Activated T-helper 2 cell treated with anti-CD3 and anti-CD28 coated beads, Interferon-gamma antibody, Interleukin-2, Interleukin-4, amounts not matched to agents 10 μg/mL and 5 μg/mL and 100 μg/mL, durations not matched to agents 14 hours and 24 hours and 36 hours (primary cell): ENCODE measurements at regions of chr7 and their contacts with region 1.

Region 1: DNA sequence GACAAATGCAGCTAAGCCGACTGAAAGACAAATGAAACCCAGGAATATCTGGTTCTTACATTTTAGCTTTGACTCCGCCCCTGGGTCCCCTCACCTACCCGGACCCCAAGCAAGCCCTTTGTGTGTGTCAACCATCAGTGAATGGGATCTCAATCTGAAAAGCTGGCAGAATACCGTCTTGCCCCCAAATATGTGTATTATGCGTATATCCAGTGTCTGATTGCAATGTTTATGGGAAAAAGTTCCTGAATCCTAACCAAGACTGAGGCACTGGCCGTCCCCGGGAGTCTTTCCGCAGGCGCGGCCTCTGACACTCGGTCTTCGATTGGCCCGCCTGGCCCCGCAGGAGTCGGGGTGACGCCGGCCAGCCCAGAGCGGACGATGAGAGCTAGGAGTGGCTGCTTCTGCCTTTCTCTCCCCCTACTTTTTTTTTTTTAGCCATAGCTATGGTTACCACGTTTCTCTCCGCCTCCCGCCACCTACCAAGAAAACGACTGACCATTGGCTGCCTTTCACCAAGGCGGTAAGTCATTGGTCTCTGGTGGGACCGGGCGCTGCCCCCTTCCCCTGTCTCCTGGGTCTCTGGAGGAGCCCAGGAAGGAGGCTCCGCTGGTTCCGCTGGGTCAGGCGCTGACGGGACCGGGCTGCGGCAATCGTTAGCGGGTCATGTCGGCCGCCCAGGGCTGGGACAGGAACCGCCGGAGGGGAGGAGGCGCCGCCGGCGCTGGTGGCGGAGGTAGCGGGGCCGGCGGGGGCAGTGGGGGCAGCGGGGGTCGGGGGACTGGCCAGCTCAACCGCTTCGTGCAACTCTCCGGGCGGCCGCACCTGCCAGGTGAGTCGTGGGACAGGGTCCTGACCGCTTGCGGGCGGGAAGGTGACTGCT is at the start of gene KLHDC10:
- DNase-seq: peak; percentile 94
- H3K4me3 Mint-ChIP-seq: peak within 1 kb of the TSS; percentile 95
- H3K27ac Mint-ChIP-seq: peak within 1 kb of the TSS; percentile 81
- H3K4me1 Mint-ChIP-seq: peaks cover 19% of the 10 kb centered on the region
- H3K27me3 Mint-ChIP-seq: no peaks in the 10 kb centered on the region
- total RNA-seq, gene KLHDC10: 13.9 and 16.0 TPM in 2 replicates

Region 2: DNA sequence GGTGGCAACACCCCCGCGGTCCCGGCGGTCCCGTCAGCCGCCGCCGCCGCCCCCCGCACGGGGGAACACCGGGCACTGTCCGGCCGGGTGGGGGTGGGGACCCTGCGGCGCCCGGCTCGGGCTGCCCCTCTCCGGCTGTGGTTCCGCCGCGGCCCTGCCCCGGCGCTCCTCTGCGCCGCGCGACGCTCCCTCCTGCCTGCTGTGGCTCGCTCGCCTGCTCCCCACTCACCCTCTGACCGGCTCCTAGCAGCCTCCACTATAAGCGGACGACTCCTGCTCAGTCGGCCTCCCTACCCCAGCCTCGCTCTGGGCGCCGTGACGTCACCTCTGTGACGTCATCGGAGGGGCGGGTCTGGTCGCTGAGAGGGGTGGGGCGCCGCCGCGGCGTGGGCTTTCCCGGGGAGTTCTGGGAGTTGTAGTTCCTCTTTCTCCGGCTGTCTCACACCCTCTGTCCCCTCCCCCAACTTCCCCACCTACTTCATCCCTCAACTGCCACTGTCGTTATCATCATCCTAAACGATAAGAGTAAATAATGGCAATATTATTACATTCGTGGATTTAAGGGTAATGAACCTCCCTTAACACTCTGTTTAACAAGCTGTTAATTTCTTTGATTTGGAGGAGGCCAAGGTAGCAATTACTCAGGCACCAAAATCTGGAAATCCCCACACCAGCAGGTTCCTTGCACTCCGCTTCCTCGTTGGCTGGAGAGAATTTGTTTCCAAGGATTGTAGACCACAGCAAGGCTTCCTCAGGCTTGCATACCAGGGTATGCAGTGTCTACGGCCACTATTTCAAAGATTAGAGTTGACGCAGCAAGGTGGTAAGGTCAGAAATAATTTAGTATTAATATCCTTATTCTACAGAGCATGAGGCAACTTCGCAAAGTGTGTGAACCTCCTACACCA is 117.3 kb before region 1 on chr7 and contains the start of gene UBE2H:
- intact Hi-C with region 1: loop called (anchors 2 kb)
- DNase-seq: peak; percentile 80
- H3K4me3 Mint-ChIP-seq: peak within 1 kb of the TSS; percentile 99
- H3K27ac Mint-ChIP-seq: peak within 1 kb of the TSS; percentile 100
- H3K4me1 Mint-ChIP-seq: peaks cover 10% of the 10 kb centered on the region
- H3K27me3 Mint-ChIP-seq: peaks cover 8% of the 10 kb centered on the region
- total RNA-seq, gene UBE2H: 16.4 and 23.9 TPM in 2 replicates

Region 3: DNA sequence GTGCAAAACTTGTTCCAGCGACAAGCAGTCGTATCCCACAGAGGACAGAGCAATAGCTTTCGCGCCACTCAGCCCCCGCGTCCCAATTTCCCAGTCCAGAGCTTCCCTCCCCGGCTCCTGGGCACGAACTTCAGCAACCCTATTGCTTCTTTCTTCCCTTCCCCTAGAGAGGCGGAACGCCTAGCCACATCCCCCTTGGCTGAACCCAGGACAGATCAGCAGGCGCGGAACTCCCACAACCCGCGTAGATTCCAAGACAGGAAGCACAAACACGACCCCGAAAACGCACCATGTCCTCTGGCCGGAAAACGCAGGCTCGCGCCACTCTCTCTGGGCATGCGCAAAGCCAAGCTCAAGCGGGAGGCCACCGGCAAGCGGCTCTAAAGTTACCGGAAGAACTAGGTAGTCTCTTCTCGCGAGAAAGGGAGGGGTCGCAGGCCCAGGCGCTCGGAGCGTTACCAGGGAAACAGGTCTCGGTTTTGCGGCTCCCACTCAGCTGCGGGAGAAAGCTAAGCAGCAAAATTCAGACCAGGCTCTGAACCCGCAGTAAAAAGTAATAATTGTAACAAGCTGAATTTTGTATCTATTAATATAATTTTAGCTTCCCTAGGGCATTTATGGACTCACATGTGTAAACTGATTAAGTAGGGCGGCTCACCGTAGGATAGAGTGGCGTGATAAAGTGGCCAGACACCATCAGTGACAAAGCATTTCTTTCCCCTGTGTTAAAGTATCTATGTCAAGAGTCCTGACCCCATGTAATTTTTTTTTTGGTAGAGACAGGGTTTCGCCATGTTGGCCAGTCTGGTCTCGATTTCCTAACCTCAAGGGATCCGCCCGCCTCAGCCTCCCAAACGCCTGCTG is 135.1 kb after region 1 on chr7 and contains the start of gene TMEM209:
- intact Hi-C with region 1: loop called (anchors 2 kb)
- DNase-seq: peak; percentile 95
- H3K4me3 Mint-ChIP-seq: peak within 1 kb of the TSS; percentile 99
- H3K27ac Mint-ChIP-seq: peak within 1 kb of the TSS; percentile 99
- H3K4me1 Mint-ChIP-seq: peaks cover 18% of the 10 kb centered on the region
- H3K27me3 Mint-ChIP-seq: no peaks in the 10 kb centered on the region
- total RNA-seq, gene TMEM209: 41.6 and 43.2 TPM in 2 replicates

Region 4: GRCh38 chr7:130419658-130420057 is 349.4 kb after region 1 on chr7:
- intact Hi-C with region 1: loop called (anchors 10 kb)
- DNase-seq: no peak
- H3K4me3 Mint-ChIP-seq: no peak overlapping the region
- H3K27ac Mint-ChIP-seq: peak overlapping the region; percentile 63
- H3K4me1 Mint-ChIP-seq: peaks cover 61% of the 10 kb centered on the region
- H3K27me3 Mint-ChIP-seq: no peaks in the 10 kb centered on the region

Region 5: GRCh38 chr7:130668257-130669084 is 598.3 kb after region 1 on chr7 and contains the start of gene COPG2:
- intact Hi-C with region 1: loop called (anchors 5 kb)
- DNase-seq: peak; percentile 71
- H3K4me3 Mint-ChIP-seq: peak within 1 kb of the TSS; percentile 87
- H3K27ac Mint-ChIP-seq: peak within 1 kb of the TSS; percentile 61
- H3K4me1 Mint-ChIP-seq: peaks cover 19% of the 10 kb centered on the region
- H3K27me3 Mint-ChIP-seq: peaks cover 12% of the 10 kb centered on the region
- total RNA-seq, gene COPG2: 26.7 and 27.4 TPM in 2 replicates

Region 6: DNA sequence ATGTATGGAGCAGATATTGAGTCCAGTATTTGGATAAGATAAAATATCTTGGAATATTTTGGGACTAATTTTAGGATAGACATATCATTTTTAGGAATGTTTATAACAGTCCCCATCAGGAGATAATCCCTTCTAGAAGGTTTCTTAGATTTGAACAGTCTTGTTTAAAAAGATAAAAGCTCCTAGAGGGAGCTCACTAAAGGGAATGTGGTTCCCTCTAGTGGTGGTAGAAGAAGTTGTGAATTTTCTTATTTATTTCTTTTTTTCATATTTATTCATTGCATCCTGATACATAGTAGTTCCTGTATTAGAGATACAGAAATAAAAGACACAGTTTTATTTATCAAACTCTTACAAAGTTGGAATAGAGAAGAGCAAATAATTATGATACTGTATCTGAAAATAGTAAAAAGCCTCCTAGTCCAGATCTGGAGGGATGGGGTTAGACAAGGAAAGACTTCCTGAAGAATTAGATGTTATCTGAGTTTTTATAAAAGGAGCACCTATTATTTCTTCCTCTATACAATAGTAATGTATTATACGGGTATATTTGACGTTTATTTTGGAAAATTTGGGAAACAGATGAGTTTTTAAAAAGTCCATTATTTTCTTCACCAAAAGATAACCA is 688.3 kb after region 1 on chr7:
- intact Hi-C with region 1: loop called (anchors 1 kb)
- DNase-seq: no peak
- H3K4me3 Mint-ChIP-seq: no peak overlapping the region
- H3K27ac Mint-ChIP-seq: no peak overlapping the region
- H3K4me1 Mint-ChIP-seq: no peaks in the 10 kb centered on the region
- H3K27me3 Mint-ChIP-seq: peaks cover 10% of the 10 kb centered on the region